Dendritic cell treated with granulocyte-macrophage colony-stimulating factor and Interleukin-4, amounts not matched to agents 40 ng/mL and 50 ng/mL, for 4 days (primary cell): ENCODE measurements at regions of chr11 and their contacts with region 1.

Region 1: DNA sequence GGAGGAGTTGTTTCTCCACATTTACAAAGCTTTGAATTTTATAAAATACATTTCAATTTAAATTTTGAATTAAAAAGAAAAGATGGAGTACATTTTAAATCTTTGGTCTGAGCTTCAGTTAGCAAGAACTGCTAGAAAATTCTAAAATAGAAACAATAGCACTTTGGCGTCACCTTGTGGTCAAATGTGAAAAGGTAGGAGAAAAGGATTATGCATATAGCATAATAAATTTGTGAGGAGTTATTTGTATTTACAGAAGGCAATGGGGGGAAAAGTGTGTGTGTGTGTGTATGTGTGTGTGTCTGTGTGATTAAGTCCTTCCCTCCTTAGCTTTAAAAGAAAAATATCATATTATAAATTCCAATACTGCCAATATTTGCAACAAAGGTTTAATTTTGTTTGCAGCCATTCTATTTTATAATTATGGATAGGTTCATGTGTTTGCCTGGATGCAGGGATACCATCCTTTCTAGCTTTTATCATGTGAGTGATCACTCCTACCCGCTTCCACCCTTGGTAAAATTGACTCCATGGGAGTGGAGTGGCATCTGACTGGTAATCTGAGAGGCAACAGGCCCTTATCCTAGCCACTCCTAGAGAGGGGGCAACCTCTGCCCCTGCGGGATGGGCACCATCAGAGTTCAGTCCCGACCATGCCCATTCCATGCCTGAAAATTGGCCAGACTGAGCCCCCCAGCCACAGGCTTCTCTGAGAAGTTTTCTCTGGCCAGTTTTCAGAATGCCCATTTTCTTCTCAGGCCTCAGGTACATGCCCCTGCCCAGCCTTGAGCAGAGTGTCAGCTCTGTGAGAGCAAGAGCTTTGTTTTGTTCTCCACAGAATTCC is 13.6 kb upstream of the LGR4 start:
- H3K4me3 Mint-ChIP-seq: no peak overlapping the region
- H3K27ac Mint-ChIP-seq: no peak overlapping the region
- H3K4me1 Mint-ChIP-seq: no peaks in the 10 kb centered on the region
- H3K27me3 Mint-ChIP-seq: no peaks in the 10 kb centered on the region

Region 2: GRCh38 chr11:26286472-26287066 is 1199.6 kb before region 1 on chr11:
- intact Hi-C with region 1: loop called (anchors 5 kb)
- H3K4me3 Mint-ChIP-seq: no peak overlapping the region
- H3K27ac Mint-ChIP-seq: no peak overlapping the region
- H3K4me1 Mint-ChIP-seq: no peaks in the 10 kb centered on the region
- H3K27me3 Mint-ChIP-seq: peaks cover 8% of the 10 kb centered on the region

Region 3: DNA sequence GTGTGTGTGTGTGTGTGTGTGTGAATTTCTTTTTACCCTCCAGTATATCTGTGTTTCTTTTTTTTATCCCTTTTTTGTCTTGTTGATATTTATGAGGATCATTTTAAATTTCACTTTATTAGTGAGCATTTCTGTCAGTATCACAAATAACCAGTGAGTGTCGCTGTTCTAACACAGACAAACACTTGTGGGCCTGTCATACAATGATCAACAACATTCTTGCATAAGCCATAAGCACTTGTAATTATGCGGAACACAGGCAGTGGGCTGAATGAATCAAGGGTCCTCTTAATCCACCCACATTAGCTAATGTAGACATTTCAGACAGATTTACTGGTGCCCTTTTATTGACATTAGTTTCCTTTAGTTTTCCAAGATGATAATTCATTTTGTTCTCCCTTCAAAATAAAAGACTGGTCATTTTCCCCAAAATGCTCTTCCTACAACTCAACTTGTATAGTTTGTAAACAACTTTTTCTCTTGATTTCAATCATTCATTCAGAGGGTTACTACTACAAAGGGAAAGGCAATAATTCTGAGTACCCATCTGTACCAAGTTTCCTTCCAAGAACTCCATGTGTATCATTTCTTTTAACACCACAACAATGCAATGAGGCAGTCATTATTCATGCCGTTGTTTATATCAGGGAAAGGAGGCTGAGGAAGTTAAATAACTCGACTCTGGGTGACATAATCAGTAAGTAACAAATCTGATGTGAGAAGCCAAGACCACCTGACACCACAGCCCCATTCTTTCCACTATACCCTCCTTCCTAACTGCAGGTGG is 1188.8 kb before region 1 on chr11:
- intact Hi-C with region 1: loop called (anchors 5 kb)
- H3K4me3 Mint-ChIP-seq: no peak overlapping the region
- H3K27ac Mint-ChIP-seq: no peak overlapping the region
- H3K4me1 Mint-ChIP-seq: no peaks in the 10 kb centered on the region
- H3K27me3 Mint-ChIP-seq: no peaks in the 10 kb centered on the region

Region 4: DNA sequence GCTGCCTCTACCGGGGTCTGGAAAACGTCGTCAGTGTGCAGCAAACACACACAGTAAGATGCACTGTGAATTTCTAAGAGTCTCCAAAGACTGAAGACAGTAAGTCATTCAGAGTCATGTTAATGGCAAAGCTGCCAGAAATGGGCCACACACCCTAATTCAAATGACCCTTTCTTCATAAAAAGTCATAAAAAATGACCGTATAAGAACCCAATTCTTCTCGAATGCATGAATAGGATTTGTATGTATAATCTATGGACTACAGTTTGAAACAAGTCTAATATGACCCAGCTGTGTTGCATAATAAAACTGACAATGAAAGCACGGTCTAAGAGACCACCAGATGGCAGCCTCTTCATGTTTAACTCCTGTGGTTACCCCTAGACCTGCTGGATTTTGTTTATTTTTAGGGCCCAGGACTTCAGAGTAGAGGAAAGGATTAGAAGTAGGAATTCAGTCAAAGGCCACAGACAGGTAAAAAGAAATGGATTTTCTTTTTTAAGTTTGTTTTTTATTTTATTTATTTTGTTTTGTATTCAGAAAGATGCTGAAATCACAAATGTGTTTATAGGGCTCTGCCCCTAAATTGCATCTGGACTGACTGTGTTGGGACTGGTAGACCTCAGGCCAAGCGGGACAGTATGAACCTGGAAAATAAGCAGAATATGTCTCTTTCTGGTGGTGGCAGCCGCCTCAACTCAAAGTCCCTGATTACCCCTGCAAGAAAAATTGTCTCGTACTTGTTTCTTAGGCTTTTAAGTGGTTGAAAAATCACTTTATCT is 732.2 kb before region 1 on chr11:
- intact Hi-C with region 1: loop called (anchors 5 kb)
- H3K4me3 Mint-ChIP-seq: no peak overlapping the region
- H3K27ac Mint-ChIP-seq: no peak overlapping the region
- H3K4me1 Mint-ChIP-seq: no peaks in the 10 kb centered on the region
- H3K27me3 Mint-ChIP-seq: no peaks in the 10 kb centered on the region

Region 5: GRCh38 chr11:27183672-27184457 is 302.3 kb before region 1 on chr11:
- intact Hi-C with region 1: loop called (anchors 1 kb)
- H3K4me3 Mint-ChIP-seq: no peak overlapping the region
- H3K27ac Mint-ChIP-seq: no peak overlapping the region
- H3K4me1 Mint-ChIP-seq: no peaks in the 10 kb centered on the region
- H3K27me3 Mint-ChIP-seq: peaks cover 5% of the 10 kb centered on the region